GM10248 (cell line): ENCODE measurements at regions of chr14 and their contacts with region 1.

Region 1: DNA sequence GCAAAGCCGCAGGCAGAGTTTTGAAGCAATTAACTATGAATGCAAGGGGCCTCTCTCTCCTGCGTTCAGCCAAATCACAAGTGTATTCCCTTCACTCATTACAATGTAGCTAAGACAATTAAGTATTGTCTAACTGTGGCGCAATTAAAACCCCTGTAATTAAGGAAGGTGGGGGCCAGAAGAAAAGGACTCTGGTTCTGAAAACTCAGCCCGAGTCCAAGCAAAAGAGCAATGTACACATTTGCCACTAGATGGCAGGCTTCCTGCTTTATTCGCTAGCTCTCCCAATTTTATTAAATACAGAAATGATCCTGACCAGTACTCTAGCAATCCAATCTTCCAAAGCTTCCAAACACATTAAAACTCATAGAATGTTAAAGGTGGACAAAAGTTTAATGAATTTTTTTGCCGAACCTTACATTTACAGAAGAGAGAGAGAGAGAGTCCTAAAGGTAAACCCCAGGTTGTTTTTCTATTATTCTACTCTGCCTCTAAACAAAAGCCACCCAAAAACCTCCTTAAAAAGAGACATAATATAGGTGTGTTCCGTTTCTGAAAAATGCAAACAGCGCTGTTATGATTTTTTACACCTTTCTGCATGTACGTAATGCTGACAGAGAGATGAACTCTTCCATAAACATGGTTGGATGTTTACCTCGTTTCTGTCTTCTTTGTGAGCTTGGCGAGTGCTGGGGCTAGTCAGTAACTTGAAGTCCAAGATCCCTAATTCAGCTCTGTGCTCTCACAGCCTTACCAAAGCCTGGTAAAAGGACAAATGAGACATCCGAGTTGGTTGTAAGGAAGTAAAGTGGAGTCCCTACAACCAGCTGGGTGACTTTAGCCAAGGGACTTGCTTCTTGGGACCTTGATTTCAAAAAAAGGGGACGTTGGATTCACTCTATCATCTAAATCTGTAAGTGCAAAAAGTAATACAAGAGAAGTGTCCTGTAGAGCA is 50.9 kb upstream of the VASH1 start:
- DNase-seq: peak; percentile 59
- CTCF ChIP-seq: peak; percentile 58

Region 2: DNA sequence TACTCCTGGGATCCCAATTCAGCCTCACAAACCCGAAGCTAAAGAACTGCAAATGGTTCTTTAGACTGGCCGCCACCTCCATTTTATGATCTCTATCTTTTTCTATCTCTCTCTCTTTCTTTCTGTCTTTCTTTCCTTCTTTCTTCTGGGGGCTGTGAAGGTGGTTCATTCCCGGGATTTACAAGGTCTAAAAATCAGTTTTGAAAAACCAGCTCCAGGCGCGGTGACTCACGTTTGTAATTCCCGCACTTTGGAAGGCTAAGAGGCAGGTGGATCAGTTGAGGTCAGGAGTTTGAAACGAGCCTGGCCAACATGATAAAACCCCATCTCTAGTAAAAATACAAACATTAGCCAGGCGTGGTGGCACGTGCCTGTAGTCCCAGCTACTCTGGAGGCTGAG is 16.2 kb before region 1 on chr14:
- CTCF ChIA-PET with region 1: interaction called, 34 read pairs
- POLR2A ChIA-PET with region 1: no interaction called
- DNase-seq: no peak
- CTCF ChIP-seq: no peak

Region 3: DNA sequence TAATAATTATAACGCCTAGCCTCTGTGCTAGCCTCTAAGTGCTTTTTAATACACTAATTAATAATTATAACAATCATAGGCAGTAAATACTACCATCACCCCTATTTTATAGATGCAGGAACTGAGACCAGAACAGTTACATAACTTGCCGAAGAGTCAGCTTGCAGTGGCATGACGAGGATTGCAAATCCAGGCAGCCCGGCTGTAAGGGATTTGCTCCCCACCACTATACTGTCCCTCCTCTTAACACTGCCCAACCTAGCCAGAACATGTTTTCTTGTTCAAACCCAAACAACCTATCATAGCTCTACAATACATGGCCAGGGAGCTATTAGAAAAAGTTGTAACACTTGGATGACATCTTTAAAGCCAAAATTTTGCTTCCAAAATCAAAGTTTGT is 17.1 kb after region 1 on chr14:
- CTCF ChIA-PET with region 1: interaction called, 55 read pairs
- POLR2A ChIA-PET with region 1: no interaction called
- DNase-seq: no peak
- CTCF ChIP-seq: no peak

Region 4: DNA sequence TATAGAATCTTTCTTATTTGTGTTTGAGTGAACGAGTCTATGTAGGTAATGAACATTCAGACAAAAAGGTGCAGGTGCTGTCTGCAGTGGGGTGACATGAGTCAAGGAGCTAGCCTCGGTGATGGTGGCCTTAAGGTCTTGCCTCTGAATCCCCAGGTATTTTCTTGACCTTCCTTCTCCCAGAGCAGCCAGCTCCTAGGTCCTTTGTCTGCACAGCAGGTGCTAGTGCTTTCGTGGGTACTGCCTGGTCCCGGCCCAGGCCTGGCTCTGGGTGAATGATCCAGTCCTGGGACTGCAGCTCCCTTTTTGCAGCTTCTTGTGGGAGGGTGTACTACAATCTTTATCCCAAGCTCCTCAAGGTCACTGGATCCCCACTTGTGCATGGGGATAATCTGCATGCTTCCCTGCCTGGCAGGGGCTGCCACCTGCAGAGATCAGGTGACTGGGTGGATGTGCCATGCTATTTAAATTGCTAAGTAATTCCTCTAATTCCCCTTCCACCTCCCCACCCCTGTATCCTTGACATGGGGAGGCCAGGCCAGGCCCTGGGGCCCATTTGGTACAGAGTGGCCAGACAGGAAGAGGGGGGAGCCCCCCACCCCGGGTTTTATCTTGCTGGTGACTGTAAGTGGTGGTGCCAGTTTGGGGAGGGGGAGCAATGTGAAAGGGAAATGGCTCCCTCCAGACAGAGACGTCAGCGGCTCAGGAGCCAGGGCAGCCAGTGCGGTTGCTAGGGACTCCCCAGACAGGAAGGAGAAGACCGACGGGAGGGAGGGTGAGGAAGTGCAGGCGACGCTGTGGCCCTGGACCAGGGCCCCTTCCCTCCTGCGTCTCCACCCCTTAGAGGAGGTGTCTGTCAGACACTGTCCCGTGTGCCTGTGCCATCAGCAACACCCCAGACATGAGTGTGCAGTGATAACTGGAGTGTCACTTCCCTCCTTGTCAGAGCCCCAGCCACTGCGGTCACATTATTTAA is 57.6 kb after region 1 on chr14:
- CTCF ChIA-PET with region 1: interaction called, 18 read pairs
- POLR2A ChIA-PET with region 1: no interaction called
- DNase-seq: peak; percentile 82
- CTCF ChIP-seq: no peak

Region 5: DNA sequence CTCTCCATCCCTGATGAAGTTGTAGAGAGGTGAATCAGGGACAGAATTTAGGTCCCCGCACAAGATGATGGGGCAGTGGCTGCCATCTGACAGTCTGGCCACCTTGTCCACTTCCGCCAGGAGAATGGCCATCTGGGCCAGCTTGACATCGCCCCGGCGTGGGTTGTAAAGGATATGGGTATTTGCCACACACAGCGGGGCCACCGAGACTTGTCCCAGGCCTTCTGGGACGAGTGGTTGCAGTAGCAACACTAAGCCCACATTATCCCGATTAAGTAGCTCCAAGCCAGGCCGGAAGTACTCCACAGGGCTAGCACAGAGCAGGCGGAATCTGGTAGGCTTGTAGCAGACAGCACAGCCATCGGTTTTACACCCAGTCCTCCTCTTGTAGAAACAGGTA is 96.1 kb after region 1 on chr14:
- CTCF ChIA-PET with region 1: interaction called, 39 read pairs
- POLR2A ChIA-PET with region 1: no interaction called
- DNase-seq: no peak
- CTCF ChIP-seq: no peak